GM18951 (cell line): ENCODE measurements at regions of chrX and their contacts with region 1.

Region 1: GRCh38 chrX:20066968-20067708 is 49.6 kb downstream of the MAP7D2 start:
- POLR2A ChIP-seq: no peak

Region 2: DNA sequence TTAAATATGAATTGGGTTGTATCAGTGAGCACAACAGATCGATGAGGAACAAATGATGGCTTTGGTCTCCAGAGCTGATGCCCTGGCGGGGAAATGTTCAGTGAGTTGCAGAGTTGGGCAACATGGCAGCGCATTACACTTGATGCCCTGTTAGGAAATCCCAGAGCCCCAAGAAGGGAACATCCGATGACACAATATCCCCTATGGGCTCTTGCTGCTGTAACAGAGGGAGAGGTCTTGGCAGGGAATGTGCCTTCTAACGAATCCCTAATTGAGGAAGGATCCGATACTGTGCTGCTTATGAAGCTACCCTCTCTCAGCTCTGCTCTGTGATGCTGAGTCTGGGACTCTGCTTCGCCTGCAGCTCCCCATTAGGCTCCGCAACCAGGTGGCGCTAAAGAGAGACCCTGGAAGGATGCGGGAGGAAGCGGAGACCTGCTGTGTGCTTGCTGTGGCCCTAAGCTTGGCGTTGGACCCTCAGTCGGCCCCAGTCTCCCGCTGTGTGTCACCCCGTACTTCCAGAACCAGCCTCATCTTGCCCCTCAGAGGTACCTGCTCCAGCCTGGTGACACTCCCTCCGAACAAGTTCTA is 684.5 kb before region 1 on chrX:
- in situ Hi-C with region 1: loop called (anchors 25 kb)
- POLR2A ChIP-seq: no peak

Region 3: GRCh38 chrX:19772826-19773628 is 294.1 kb before region 1 on chrX:
- in situ Hi-C with region 1: loop called (anchors 25 kb)
- POLR2A ChIP-seq: no peak

Region 4: GRCh38 chrX:19887911-19888879 is 178.9 kb before region 1 on chrX:
- in situ Hi-C with region 1: loop called (anchors 10 kb)
- POLR2A ChIP-seq: no peak